Uterus (tissue), 4 donors: ENCODE measurements at regions of chr10 and their contacts with region 1.

Region 1: GRCh38 chr10:104353325-104354048 is at the start of gene CFAP58:
- DNase-seq: peak; percentile 96
- H3K4me3 ChIP-seq: peak within 1 kb of the TSS; percentile 31
- H3K27ac ChIP-seq: peak within 1 kb of the TSS; percentile 20 to 43
- H3K4me1 ChIP-seq: no peaks in the 10 kb centered on the region
- H3K27me3 ChIP-seq: no peaks in the 10 kb centered on the region
- CTCF ChIP-seq: peak; percentile 72 to 89 (median 78)
- POLR2A ChIP-seq: peak in 1 of 2 donors; percentile 36
- total RNA-seq, gene CFAP58: 0.29 to 2.2 (median 1.3) TPM

Region 2: DNA sequence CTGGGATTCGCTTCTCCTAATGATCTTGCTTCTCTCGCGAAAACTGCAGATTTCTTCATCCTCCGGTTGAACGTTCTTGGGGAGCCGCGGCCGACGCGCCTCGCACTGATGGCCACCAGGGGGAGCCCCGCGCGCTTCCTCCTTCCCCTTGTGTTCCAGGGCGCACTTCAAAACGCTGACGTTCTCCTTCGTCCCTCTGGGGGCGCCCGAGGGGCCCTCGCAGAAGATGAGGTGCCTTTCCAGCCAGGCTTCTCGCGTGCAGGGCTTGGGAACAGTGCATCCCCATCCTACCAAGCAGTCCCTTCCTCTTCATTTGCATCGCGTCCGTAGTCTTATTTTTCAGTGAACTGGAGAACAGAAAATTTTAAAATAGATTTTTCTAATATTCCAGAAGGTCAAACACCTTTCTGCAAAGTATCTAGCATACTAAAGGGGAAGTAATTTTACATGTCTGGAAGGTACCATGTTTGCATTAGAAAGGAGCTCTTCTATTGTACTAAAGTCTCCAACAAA is 62.0 kb before region 1 on chr10:
- intact Hi-C with region 1: loop called (anchors 2 kb)
- DNase-seq: peak; percentile 91 to 92
- H3K4me3 ChIP-seq: no peak overlapping the region
- H3K27ac ChIP-seq: peak overlapping the region in 1 of 2 donors; percentile 22
- H3K4me1 ChIP-seq: no peaks in the 10 kb centered on the region
- H3K27me3 ChIP-seq: no peaks in the 10 kb centered on the region
- CTCF ChIP-seq: peak; percentile 100
- POLR2A ChIP-seq: peak in 1 of 2 donors; percentile 35

Region 3: DNA sequence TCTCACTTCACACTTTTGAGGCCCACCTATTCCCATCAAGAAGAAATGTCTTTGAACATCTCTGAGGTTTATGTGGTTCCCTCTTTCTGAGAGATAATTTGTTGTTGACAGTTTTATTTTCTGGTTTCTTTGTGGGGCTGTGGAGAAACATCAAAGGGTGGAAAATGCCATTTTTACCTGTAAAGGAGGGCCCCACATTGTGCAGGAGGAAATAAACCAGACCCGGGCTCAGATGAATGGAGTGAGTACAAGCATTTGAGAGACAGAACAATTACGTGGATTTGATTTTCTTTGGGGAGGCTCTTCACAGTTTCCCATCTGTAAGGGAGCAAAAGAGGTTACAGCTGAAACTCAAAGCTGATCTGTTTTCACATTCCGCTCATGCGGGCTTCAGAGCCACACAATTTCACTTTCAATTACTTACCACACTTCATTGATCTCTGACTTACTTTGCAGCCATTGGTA is 45.0 kb before region 1 on chr10:
- intact Hi-C with region 1: loop called (anchors 5 kb)
- DNase-seq: no peak
- H3K4me3 ChIP-seq: no peak overlapping the region
- H3K27ac ChIP-seq: peak overlapping the region in 1 of 2 donors; percentile 40
- H3K4me1 ChIP-seq: peaks cover 0 to 6% of the 10 kb centered on the region in 2 donors
- H3K27me3 ChIP-seq: no peaks in the 10 kb centered on the region
- CTCF ChIP-seq: no peak
- POLR2A ChIP-seq: no peak